ENCODE measurements at regions of chr2 and their contacts with region 1.

Region 1: DNA sequence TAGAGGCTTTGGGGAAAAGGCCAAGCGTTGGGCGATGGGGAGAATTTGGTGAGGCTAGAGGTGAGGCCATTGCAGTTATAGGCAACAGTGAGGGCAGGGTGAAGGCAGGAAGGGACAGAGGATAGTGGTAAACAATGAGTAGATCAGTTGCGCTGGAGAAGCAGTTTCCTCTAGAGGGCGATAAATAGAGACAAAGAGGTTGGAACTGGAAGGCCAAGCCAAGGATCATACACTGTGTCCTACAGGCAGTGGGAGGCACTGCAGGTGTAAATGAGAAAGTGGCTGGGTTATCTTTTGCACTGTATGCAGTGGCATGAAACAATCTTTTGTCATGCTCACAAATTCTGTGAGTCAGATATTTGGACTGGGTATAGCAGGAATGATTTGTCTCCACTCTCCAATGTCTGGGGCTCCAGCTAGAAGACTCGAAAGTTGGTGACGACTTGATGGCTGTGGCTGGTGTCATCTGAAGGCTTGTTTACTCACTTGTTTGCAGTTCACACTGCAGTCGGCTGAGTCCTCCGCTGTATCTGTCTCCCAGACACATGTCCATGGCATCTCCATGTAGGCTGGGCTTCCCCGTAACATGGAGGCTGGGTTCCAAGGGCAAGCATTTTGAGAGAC is 82.1 kb downstream of the TNP1 start:
- DNase-seq: no peak
- H3K4me3 ChIP-seq: no peak overlapping the region
- H3K27me3 ChIP-seq: no peaks in the 10 kb centered on the region
- CTCF ChIP-seq: peak; percentile 58

Region 2: GRCh38 chr2:216789081-216789480 is 11.3 kb after region 1 on chr2:
- CTCF ChIA-PET with region 1: interaction called, 25 read pairs
- POLR2A ChIA-PET with region 1: no interaction called
- DNase-seq: no peak
- H3K4me3 ChIP-seq: no peak overlapping the region
- H3K27me3 ChIP-seq: 0 out of 2 replicates have a peak, but pooled peaks cover 1% of the 10 kb centered on the region
- CTCF ChIP-seq: no peak

Region 3: GRCh38 chr2:217218269-217219163 is 440.8 kb after region 1 on chr2:
- CTCF ChIA-PET with region 1: no interaction called
- POLR2A ChIA-PET with region 1: no interaction called
- DNase-seq: no peak
- H3K4me3 ChIP-seq: no peak overlapping the region
- H3K27me3 ChIP-seq: no peaks in the 10 kb centered on the region
- CTCF ChIP-seq: no peak

Measured in BJ (cell line).